ENCODE measurements at regions of chr5 and their contacts with region 1.

Region 1: DNA sequence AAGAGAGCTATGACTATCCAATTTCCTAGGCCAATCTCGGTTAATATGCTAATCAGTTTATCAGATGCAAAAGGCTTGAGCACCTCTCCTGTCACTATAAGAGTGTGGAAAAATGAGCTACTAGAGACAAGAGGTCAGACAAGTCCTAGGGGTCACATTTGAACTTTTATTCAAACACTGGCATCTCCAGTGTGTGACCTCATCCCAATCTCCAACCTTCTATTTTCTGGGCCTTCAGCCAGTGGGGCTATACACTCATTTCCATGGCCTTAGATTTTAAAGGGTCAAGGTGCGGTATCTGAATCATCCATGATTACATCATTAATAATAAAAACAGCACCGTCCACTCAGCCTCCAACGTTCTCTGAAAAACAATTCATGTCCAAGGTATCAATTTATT is 139.6 kb upstream of the LRRTM2 start:
- DNase-seq: no peak
- ATAC-seq: no peak
- H3K4me3 ChIP-seq: no peak overlapping the region
- H3K4me3 Mint-ChIP-seq: no peak overlapping the region
- H3K27ac ChIP-seq: no peak overlapping the region
- H3K27ac Mint-ChIP-seq: no peak overlapping the region
- H3K4me1 ChIP-seq: no peaks in the 10 kb centered on the region
- H3K4me1 Mint-ChIP-seq: peaks cover 0 to 2% (median 2%) of the 10 kb centered on the region in 3 donors
- H3K27me3 ChIP-seq: no peaks in the 10 kb centered on the region
- H3K27me3 Mint-ChIP-seq: no peaks in the 10 kb centered on the region

Region 2: GRCh38 chr5:139004374-139005307 is 10.1 kb before region 1 on chr5:
- CTCF ChIA-PET with region 1: no interaction called
- POLR2A ChIA-PET with region 1: no interaction called
- DNase-seq: no peak
- ATAC-seq: no peak
- H3K4me3 ChIP-seq: no peak overlapping the region
- H3K4me3 Mint-ChIP-seq: no peak overlapping the region
- H3K27ac ChIP-seq: no peak overlapping the region
- H3K27ac Mint-ChIP-seq: no peak overlapping the region
- H3K4me1 ChIP-seq: no peaks in the 10 kb centered on the region
- H3K4me1 Mint-ChIP-seq: no peaks in the 10 kb centered on the region
- H3K27me3 ChIP-seq: no peaks in the 10 kb centered on the region
- H3K27me3 Mint-ChIP-seq: no peaks in the 10 kb centered on the region

Region 3: DNA sequence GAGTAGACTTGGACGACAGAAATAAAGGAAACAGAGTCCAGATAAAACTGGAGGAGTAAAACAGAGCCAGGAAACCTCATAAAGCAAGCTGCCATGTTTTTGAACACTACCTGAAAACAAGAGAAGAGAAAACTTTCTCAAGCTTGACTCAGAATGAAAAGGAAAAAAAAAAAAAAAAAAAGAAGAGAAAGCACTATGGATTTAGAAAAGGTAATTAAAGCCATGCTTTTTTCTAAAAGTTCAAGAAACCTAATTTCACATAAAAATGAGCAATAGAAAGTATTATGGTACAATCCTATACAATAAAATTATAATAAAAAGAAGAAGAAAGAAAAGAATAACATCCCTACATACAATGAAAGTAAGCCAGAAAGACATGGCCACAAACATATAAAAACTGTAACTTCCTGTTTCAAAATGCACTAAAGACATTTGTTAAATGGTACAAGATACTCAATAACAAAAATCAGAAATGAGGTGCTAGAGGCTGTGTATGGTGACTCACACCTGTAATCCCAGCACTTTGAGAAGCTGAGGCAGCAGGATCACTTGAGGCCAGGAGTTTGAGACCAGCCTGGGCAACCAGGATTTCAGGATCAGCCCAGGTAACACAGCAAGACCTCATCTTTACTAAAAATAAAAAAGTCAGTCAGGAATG is 53.9 kb after region 1 on chr5:
- CTCF ChIA-PET with region 1: no interaction called
- POLR2A ChIA-PET with region 1: interaction called in 1 of 2 experiments, 12 read pairs
- DNase-seq: no peak
- ATAC-seq: no peak
- H3K4me3 ChIP-seq: no peak overlapping the region
- H3K4me3 Mint-ChIP-seq: no peak overlapping the region
- H3K27ac ChIP-seq: no peak overlapping the region
- H3K27ac Mint-ChIP-seq: no peak overlapping the region
- H3K4me1 ChIP-seq: no peaks in the 10 kb centered on the region
- H3K4me1 Mint-ChIP-seq: peaks cover 9 to 16% (median 11%) of the 10 kb centered on the region in 3 donors
- H3K27me3 ChIP-seq: no peaks in the 10 kb centered on the region
- H3K27me3 Mint-ChIP-seq: no peaks in the 10 kb centered on the region